ENCODE measurements at regions of chr9 and their contacts with region 1.

Region 1: GRCh38 chr9:21802195-21803000 is at the start of gene MTAP:
- DNase-seq: peak; percentile 83
- H3K4me3 Mint-ChIP-seq: peak within 1 kb of the TSS; percentile 98
- H3K27ac Mint-ChIP-seq: peak within 1 kb of the TSS; percentile 99
- H3K4me1 Mint-ChIP-seq: peaks cover 39% of the 10 kb centered on the region
- H3K27me3 Mint-ChIP-seq: peaks cover 7% of the 10 kb centered on the region
- total RNA-seq, gene MTAP: 55.6 to 62.3 TPM

Region 2: GRCh38 chr9:21334701-21335632 is 467.4 kb before region 1 on chr9 and contains the start of gene KLHL9:
- CTCF ChIA-PET with region 1: no interaction called
- POLR2A ChIA-PET with region 1: interaction called, 3 read pairs
- intact Hi-C with region 1: loop called (anchors 2 kb)
- DNase-seq: peak; percentile 92
- H3K4me3 Mint-ChIP-seq: peak within 1 kb of the TSS; percentile 86
- H3K27ac Mint-ChIP-seq: peak within 1 kb of the TSS; percentile 87
- H3K4me1 Mint-ChIP-seq: peaks cover 50% of the 10 kb centered on the region
- H3K27me3 Mint-ChIP-seq: no peaks in the 10 kb centered on the region
- total RNA-seq, gene KLHL9: 15.9 to 16.0 TPM